ENCODE measurements at regions of chr7 and their contacts with region 1.

Region 1: DNA sequence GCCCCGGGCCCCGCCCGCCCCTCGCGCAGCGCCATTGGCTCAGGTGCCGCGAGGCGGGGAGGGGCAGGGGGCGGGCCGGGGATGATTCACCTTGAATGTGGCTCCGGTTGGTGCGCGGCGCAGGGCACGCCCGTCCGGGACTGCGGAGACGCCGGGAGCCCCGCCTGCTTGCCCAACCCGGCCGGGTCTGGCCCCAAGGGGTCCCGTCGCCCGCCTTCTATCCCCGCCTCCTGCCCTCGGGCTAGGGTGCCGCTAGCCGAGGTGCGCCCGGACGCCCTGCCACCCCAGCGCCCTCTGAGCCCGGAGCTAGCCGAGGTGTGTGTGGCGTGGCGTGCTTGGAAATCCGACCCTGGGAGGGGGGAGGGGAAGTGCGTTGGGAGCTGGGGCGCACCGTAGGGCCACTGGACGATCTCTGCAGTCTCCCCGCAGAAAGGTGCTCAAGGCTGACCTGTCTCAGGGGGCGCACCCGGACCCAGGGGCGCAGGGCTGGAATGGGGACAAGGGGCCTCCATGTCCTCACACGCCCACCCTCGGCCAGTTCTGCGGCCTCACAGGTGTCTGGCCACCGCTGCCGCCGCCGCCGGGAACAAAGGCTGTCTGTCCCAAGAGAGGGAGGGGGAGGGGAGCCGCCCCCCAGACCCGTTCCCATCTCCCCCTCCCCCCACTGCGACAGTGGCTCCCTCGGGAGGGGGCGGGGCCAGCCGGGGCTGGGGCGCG is 168.9 kb downstream of the NRF1 start:
- DNase-seq: peak; percentile 83
- H3K4me3 ChIP-seq: peak overlapping the region; percentile 63 to 91
- H3K27ac ChIP-seq: no peak overlapping the region
- H3K4me1 ChIP-seq: peaks cover 0 to 32% of the 10 kb centered on the region in 2 experiments; a peak in 1 of 4 replicates
- H3K27me3 ChIP-seq: peaks cover 45% of the 10 kb centered on the region
- CTCF ChIP-seq: no peak
- EP300 ChIP-seq: no peak
- RAD21 ChIP-seq: no peak

Region 2: GRCh38 chr7:129764247-129765084 is 15.9 kb before region 1 on chr7:
- CTCF ChIA-PET with region 1: interaction called, 10 read pairs
- POLR2A ChIA-PET with region 1: interaction called, 3 read pairs
- DNase-seq: no peak
- H3K4me3 ChIP-seq: no peak overlapping the region
- H3K27ac ChIP-seq: no peak overlapping the region
- H3K4me1 ChIP-seq: no peaks in the 10 kb centered on the region; a peak in 1 of 4 replicates
- H3K27me3 ChIP-seq: no peaks in the 10 kb centered on the region
- CTCF ChIP-seq: no peak
- EP300 ChIP-seq: no peak
- RAD21 ChIP-seq: no peak